GM10248 (cell line): ENCODE measurements at regions of chr13 and their contacts with region 1.

Region 1: GRCh38 chr13:27362064-27362883 is 62.1 kb upstream of the GTF3A start:
- DNase-seq: peak; percentile 88
- CTCF ChIP-seq: peak; percentile 88

Region 2: GRCh38 chr13:26977556-26977955 is 384.7 kb before region 1 on chr13:
- CTCF ChIA-PET with region 1: interaction called, 252 read pairs
- POLR2A ChIA-PET with region 1: no interaction called
- DNase-seq: no peak
- CTCF ChIP-seq: no peak

Region 3: GRCh38 chr13:27339299-27339698 is 23.0 kb before region 1 on chr13:
- CTCF ChIA-PET with region 1: interaction called, 192 read pairs
- POLR2A ChIA-PET with region 1: no interaction called
- DNase-seq: peak; percentile 62
- CTCF ChIP-seq: peak; percentile 68

Region 4: GRCh38 chr13:27383127-27383921 is 21.1 kb after region 1 on chr13:
- CTCF ChIA-PET with region 1: interaction called, 13 read pairs
- POLR2A ChIA-PET with region 1: no interaction called
- DNase-seq: no peak
- CTCF ChIP-seq: no peak

Region 5: GRCh38 chr13:27977476-27978300 is 615.4 kb after region 1 on chr13:
- CTCF ChIA-PET with region 1: interaction called, 96 read pairs
- POLR2A ChIA-PET with region 1: no interaction called
- DNase-seq: no peak
- CTCF ChIP-seq: no peak